Mucosa of descending colon (tissue), 3 donors: ENCODE measurements at regions of chr20 and their contacts with region 1.

Region 1: GRCh38 chr20:2172305-2173175 is 70.9 kb downstream of the STK35 start:
- DNase-seq: peak; percentile 57 to 78 (median 61)
- ATAC-seq: peak; percentile 85
- H3K4me3 ChIP-seq: no peak overlapping the region
- H3K4me1 ChIP-seq: no peaks in the 10 kb centered on the region
- CTCF ChIP-seq: peak; percentile 83

Region 2: GRCh38 chr20:1965520-1966351 is 206.8 kb before region 1 on chr20:
- intact Hi-C with region 1: loop called (anchors 5 kb)
- DNase-seq: peak; percentile 74 to 81 (median 75)
- ATAC-seq: peak; percentile 88
- H3K4me3 ChIP-seq: no peak overlapping the region
- H3K4me1 ChIP-seq: no peaks in the 10 kb centered on the region
- CTCF ChIP-seq: peak; percentile 88

Region 3: DNA sequence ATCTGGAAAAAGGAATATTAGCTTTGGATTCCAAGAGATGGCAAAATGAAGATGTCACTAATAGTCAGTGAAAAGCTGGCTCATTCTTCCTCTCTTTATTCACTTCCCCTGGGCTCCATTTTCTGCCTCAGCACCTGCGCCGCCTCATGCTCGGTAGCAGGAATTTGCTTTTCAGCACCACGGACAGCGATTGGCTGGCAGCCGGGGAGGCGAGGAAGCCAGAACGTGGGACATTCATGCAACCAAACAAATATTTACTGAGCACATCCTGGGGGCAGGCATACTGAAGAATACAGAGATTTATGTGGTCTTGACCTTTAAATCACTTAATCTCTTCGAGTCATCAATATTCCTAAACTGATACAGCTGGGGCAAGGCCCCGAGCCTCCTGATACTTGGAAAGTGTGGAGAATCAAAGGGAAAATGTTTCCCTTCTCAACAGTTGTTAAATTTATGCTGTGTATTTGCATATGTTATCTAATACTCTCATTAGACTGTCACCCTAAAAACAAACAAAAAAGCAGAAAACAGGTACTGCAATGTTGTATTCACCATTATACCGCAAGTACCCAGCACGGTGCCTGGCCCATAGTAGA is 166.6 kb before region 1 on chr20:
- intact Hi-C with region 1: loop called in 1 of 2 experiments (anchors 5 kb)
- DNase-seq: peak in 2 of 3 donors; percentile 80 to 87
- ATAC-seq: peak; percentile 63
- H3K4me3 ChIP-seq: no peak overlapping the region
- H3K4me1 ChIP-seq: no peaks in the 10 kb centered on the region
- CTCF ChIP-seq: no peak

Region 4: GRCh38 chr20:2246069-2246491 is 73.5 kb after region 1 on chr20:
- intact Hi-C with region 1: no loop called
- DNase-seq: no peak
- ATAC-seq: no peak
- H3K4me3 ChIP-seq: no peak overlapping the region
- H3K4me1 ChIP-seq: no peaks in the 10 kb centered on the region
- CTCF ChIP-seq: no peak

Region 5: DNA sequence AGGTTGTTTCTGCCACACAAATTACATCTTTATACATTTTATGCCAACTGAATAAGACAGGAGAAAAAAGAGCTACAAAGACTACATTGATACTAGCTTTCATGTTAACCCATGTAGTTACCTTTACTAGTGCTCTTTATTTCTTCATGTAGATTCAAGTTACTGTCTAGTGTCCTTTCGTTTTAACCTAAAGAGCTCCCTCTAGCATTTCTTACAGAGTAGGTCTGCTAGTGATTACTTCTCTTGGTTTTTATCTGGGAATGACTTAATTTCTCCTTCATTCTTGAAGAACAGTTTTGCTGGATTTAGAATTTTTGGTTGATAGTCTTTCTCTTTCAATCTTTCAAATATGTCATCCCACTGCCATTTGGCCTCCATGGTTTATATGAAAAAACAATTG is 458.7 kb after region 1 on chr20:
- intact Hi-C with region 1: no loop called
- DNase-seq: no peak
- ATAC-seq: peak; percentile 21
- H3K4me3 ChIP-seq: no peak overlapping the region
- H3K4me1 ChIP-seq: no peaks in the 10 kb centered on the region
- CTCF ChIP-seq: no peak